ENCODE measurements at regions of chr4 and their contacts with region 1.

Region 1: GRCh38 chr4:185395956-185396723 is 416 bp upstream of the LRP2BP start:
- DNase-seq: peak; percentile 96 to 99 (median 98)
- H3K4me3 ChIP-seq: peak overlapping the region; percentile 91
- H3K27ac ChIP-seq: peak overlapping the region; percentile 98 to 99
- H3K4me1 ChIP-seq: peaks cover 3% of the 10 kb centered on the region
- H3K27me3 ChIP-seq: no peaks in the 10 kb centered on the region
- CTCF ChIP-seq: peak in 2 of 3 donors; percentile 3 to 32
- EP300 ChIP-seq: peak; percentile 56
- POLR2A ChIP-seq: peak; percentile 81

Region 2: DNA sequence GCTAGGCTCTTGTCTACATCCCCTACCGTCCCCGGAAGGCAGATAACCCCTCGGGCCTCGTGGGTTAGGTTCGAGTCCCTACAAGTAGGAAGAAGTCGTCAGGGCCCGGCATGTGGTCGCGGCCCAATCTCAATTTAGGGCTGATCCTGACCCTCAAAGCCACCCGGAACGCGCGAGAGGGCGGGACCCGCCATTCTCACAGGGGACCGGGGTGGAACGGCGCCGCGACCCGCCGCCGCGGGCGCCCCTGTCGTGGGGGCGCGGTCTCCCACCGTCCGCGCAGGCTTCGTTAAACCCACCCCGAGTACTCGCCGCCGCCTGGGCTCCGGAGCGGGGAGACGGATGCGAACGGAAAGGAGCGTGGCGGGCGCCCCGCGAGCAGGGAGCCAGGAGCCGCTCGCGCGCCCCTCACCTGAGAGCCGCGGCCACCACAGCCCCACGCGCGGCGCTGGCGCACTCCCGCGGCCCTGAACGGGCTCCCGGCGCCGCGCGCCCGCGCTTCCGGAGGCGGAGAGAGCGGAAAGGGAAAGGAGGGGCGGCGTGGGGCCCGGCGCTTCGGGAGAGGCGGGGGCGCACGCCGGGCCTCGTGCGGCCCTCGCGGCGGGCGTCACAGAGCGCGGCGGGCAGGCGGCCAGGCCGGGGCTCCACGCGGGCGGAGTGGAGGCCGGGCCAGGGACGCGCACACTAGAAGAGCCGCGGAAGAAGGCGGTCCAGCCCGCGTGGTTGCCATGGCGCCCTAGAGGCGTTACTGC is 192.5 kb before region 1 on chr4 and contains the start of gene CFAP97:
- intact Hi-C with region 1: loop called in 3 of 4 experiments (anchors 5 to 10 kb)
- DNase-seq: peak; percentile 92 to 96 (median 94)
- H3K4me3 ChIP-seq: peak within 1 kb of the TSS; percentile 88
- H3K27ac ChIP-seq: peak within 1 kb of the TSS; percentile 94 to 97
- H3K4me1 ChIP-seq: peaks cover 3% of the 10 kb centered on the region
- H3K27me3 ChIP-seq: no peaks in the 10 kb centered on the region
- CTCF ChIP-seq: peak in 2 of 3 donors; percentile 3 to 33
- EP300 ChIP-seq: no peak
- POLR2A ChIP-seq: peak; percentile 89
- total RNA-seq, gene CFAP97: 28.8 to 57.6 (median 46.7) TPM

Region 3: GRCh38 chr4:185210102-185210981 is 185.8 kb before region 1 on chr4:
- intact Hi-C with region 1: loop called in 3 of 4 experiments (anchors 10 kb)
- DNase-seq: peak; percentile 53 to 71 (median 70)
- H3K4me3 ChIP-seq: peak overlapping the region; percentile 54
- H3K27ac ChIP-seq: peak overlapping the region; percentile 96 to 99
- H3K4me1 ChIP-seq: no peaks in the 10 kb centered on the region
- H3K27me3 ChIP-seq: no peaks in the 10 kb centered on the region
- CTCF ChIP-seq: no peak
- EP300 ChIP-seq: no peak
- POLR2A ChIP-seq: peak; percentile 36

Region 4: GRCh38 chr4:185437809-185438208 is 41.7 kb after region 1 on chr4:
- intact Hi-C with region 1: no loop called
- DNase-seq: no peak
- H3K4me3 ChIP-seq: no peak overlapping the region
- H3K27ac ChIP-seq: no peak overlapping the region
- H3K4me1 ChIP-seq: no peaks in the 10 kb centered on the region
- H3K27me3 ChIP-seq: no peaks in the 10 kb centered on the region
- CTCF ChIP-seq: no peak
- EP300 ChIP-seq: no peak
- POLR2A ChIP-seq: no peak

Region 5: DNA sequence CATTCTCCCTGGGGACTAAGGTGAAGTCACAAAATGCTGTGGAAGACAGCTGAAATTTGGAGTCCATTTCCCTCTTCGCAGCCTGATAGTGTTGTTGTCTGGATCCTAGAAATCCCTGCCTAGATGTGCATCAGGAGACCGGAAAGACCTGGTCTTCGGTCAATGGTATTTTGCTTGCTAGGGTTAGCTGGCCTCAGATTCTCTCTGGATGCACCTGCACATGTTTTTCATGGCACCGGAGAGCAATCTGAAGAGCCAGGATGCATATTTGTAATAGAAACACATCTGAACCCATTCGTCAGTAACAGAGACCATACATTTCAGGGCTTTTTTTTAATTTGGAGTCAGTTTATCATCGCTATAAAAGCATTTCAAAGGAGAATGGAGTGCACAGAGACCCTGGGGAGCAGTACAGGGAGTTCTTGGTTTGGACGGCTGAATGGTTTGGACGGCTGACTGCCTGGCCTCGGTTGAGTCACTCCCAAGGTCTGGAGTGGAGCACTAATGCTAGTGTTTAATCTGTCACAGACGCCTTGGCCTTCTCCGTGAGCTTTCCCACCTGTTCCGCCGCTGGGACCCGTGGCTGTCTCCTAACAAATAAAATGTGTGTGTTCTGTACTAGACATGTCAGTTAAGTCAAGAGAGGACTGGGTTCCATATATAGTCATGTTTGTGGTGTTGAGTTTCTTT is 146.6 kb after region 1 on chr4:
- intact Hi-C with region 1: no loop called
- DNase-seq: peak; percentile 82 to 86 (median 84)
- H3K4me3 ChIP-seq: no peak overlapping the region
- H3K27ac ChIP-seq: no peak overlapping the region
- H3K4me1 ChIP-seq: peaks cover 13% of the 10 kb centered on the region
- H3K27me3 ChIP-seq: no peaks in the 10 kb centered on the region
- CTCF ChIP-seq: no peak
- EP300 ChIP-seq: no peak
- POLR2A ChIP-seq: no peak

Measured in ovary (tissue), 10 donors.